WTC11 (cell line): ENCODE measurements at regions of chr21 and their contacts with region 1.

Region 1: DNA sequence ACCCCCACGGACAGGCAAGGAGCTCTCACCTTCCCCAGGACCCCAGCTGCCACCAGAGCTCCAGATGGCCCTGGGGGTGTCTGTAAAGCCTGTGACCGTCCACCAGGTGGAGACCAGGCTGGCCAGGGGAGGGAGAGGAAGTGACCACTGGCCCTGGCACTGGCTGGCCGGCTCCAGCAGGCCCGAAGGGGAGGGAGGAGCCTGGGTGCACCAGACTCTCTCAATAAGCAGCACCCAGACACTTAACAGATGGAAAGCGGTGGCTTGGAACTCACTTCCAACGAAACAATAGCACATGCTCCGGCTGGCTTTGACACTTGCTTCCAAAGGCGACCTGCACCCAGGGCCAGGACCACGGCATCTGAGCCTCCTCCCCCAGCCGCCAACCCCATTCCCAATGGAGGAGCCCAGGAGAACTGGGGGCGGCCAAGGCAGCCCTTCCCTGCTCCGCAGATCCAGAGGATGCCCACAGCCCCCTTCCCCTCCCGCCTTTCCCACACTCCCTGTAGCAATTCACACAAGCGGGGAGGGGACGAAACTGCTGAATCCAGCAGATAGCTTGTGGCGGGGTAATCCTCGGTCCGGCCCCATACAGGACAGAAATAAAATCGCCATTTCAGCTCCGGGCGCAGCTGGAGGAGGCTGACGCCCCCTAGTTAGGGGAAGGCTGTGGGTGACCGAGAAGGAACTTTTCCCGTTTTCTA is 742 bp upstream of the PDE9A start:
- DNase-seq: peak; percentile 66
- ATAC-seq: peak; percentile 18
- H3K4me3 Mint-ChIP-seq: peak overlapping the region; percentile 87
- H3K27ac Mint-ChIP-seq: peak overlapping the region; percentile 88
- H3K4me1 Mint-ChIP-seq: peaks cover 40% of the 10 kb centered on the region
- H3K27me3 Mint-ChIP-seq: peaks cover 4% of the 10 kb centered on the region; the same call in 1 of the 2 replicates
- CTCF ChIP-seq: 0 out of 2 replicates have a peak, but pooled peaks have one; percentile 23

Region 2: GRCh38 chr21:42467140-42467983 is 185.3 kb before region 1 on chr21:
- CTCF ChIA-PET with region 1: no interaction called
- POLR2A ChIA-PET with region 1: no interaction called
- DNase-seq: no peak
- ATAC-seq: peak; percentile 42
- H3K4me3 Mint-ChIP-seq: no peak overlapping the region
- H3K27ac Mint-ChIP-seq: no peak overlapping the region
- H3K4me1 Mint-ChIP-seq: peaks cover 48% of the 10 kb centered on the region
- H3K27me3 Mint-ChIP-seq: no peaks in the 10 kb centered on the region; the same call in 1 of the 2 replicates
- CTCF ChIP-seq: no peak

Region 3: DNA sequence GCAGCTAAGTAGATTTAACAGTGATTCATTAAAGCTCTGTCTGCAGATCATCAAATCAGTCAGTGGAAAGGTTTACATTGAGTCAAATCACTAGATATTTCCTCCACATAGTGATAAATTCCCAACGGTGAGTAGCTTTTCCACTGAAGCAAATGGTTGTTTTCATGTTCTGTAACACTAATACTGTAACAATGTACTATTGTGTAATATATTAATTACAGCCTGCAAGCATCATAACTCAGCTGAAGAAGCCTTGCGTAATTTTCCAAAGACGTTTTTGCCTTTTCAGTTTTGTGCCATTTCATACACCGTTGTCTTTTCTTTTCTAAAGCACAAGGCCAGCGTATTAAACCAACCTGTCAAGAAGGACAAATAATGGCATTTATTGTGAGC is 16.1 kb before region 1 on chr21:
- CTCF ChIA-PET with region 1: interaction called, 34 read pairs
- POLR2A ChIA-PET with region 1: no interaction called
- DNase-seq: no peak
- ATAC-seq: no peak
- H3K4me3 Mint-ChIP-seq: no peak overlapping the region
- H3K27ac Mint-ChIP-seq: no peak overlapping the region
- H3K4me1 Mint-ChIP-seq: peaks cover 18% of the 10 kb centered on the region
- H3K27me3 Mint-ChIP-seq: no peaks in the 10 kb centered on the region
- CTCF ChIP-seq: no peak

Region 4: GRCh38 chr21:42641311-42642218 is 11.1 kb before region 1 on chr21:
- CTCF ChIA-PET with region 1: interaction called, 34 read pairs
- POLR2A ChIA-PET with region 1: interaction called, 3 read pairs
- DNase-seq: no peak
- ATAC-seq: peak; percentile 71
- H3K4me3 Mint-ChIP-seq: no peak overlapping the region
- H3K27ac Mint-ChIP-seq: no peak overlapping the region
- H3K4me1 Mint-ChIP-seq: peaks cover 31% of the 10 kb centered on the region
- H3K27me3 Mint-ChIP-seq: peaks cover 13% of the 10 kb centered on the region
- CTCF ChIP-seq: no peak

Region 5: GRCh38 chr21:42666023-42666747 is 13.5 kb after region 1 on chr21:
- CTCF ChIA-PET with region 1: interaction called, 19 read pairs
- POLR2A ChIA-PET with region 1: interaction called, 5 read pairs
- DNase-seq: peak; percentile 53
- ATAC-seq: peak; percentile 61
- H3K4me3 Mint-ChIP-seq: no peak overlapping the region
- H3K27ac Mint-ChIP-seq: 0 out of 2 replicates have a peak overlapping the region, but pooled peaks have one; percentile 82
- H3K4me1 Mint-ChIP-seq: peaks cover 39% of the 10 kb centered on the region
- H3K27me3 Mint-ChIP-seq: no peaks in the 10 kb centered on the region
- CTCF ChIP-seq: no peak

Region 6: DNA sequence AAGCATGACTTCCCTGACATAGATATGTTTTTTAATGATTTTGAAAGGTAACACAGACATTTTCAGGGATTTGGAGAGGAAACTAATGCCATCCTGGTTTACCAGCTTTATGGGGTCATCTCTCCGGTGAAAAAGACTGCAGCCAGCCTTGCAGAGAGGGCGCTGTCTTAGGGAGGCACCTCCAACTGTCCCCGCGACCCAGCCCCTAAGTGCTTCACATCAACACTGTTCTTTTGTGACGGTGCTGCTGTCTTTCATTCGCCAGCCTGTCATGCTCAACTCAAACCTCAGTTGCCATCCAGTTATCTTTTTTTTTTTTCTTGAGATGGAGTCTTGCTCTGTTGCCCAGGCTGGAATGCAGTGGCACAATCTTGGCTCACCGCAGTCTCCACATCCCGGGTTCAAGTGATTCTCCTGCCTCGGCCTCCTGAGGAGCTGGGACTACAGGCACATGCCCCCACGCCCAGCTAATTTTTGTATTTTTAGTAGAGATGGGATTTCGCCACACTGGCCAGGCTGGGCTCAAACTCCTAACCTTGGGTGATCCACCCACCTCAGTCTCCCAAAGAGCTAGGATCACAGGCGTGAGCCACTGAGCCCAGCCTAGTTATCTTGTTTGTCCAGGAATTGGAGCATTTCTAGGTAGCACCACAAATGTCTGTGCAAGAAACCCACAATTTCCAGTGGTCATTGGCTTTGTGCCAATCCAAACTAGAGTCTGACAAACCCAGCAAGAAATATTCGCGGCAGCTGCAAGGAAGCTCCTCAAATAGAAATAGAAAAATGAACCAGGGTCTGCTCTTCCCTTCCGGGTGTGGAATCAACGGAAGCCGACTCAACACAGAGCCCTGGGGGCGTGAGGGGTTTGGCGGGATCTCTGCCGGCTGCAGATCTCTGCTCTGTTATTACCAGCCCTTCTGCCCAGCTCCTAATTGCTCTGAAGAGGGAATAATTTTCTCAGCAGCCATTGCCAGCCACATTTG is 25.0 kb after region 1 on chr21:
- CTCF ChIA-PET with region 1: interaction called, 10 read pairs
- POLR2A ChIA-PET with region 1: no interaction called
- DNase-seq: no peak
- ATAC-seq: no peak
- H3K4me3 Mint-ChIP-seq: no peak overlapping the region
- H3K27ac Mint-ChIP-seq: no peak overlapping the region
- H3K4me1 Mint-ChIP-seq: peaks cover 44% of the 10 kb centered on the region
- H3K27me3 Mint-ChIP-seq: no peaks in the 10 kb centered on the region; the same call in 1 of the 2 replicates
- CTCF ChIP-seq: no peak